MCF 10A (cell line): ENCODE measurements at regions of chr5 and their contacts with region 1.

Region 1: GRCh38 chr5:181223058-181223728 is at the start of gene TRIM41:
- DNase-seq: peak; percentile 99
- H3K4me3 Mint-ChIP-seq: peak within 1 kb of the TSS; percentile 91
- H3K27ac Mint-ChIP-seq: peak within 1 kb of the TSS; percentile 91
- H3K4me1 Mint-ChIP-seq: peaks cover 26% of the 10 kb centered on the region
- H3K27me3 Mint-ChIP-seq: no peaks in the 10 kb centered on the region
- CTCF ChIP-seq: no peak
- total RNA-seq, gene TRIM41: 42.8 and 49.4 TPM in 2 replicates

Region 2: DNA sequence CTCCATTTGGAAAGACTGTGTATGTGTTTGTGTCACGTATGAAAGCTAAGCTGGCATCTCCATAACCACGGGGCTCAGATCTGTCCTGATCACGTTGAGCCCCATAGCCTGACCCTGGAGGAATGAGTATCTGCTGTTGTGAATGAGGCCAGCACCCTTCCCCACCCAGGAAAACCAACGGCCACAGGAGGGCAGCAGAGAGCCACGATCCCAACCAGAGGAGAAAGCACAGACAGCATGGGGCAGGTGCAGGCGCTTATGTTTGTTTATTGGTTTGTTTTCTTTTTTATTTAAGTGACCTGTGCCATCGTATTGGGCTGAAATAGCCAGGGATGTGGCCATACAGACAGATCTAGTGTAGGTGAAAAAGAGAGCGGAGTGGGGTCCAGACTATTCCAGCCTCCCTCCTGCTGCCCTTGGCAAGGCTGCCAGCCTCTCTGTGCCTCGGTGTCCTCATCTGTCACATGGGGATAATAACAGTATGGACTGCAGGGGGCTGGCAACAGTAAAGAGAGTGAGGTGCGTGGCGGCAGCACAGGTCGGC is 63.8 kb before region 1 on chr5:
- CTCF ChIA-PET with region 1: no interaction called
- POLR2A ChIA-PET with region 1: interaction called, 3 read pairs
- intact Hi-C with region 1: loop called (anchors 2 kb)
- DNase-seq: peak; percentile 94
- H3K4me3 Mint-ChIP-seq: peak overlapping the region; percentile 66
- H3K27ac Mint-ChIP-seq: peak overlapping the region; percentile 97
- H3K4me1 Mint-ChIP-seq: peaks cover 11% of the 10 kb centered on the region
- H3K27me3 Mint-ChIP-seq: peaks cover 25% of the 10 kb centered on the region
- CTCF ChIP-seq: peak; percentile 97

Region 3: GRCh38 chr5:181207214-181208107 is 15.7 kb before region 1 on chr5:
- CTCF ChIA-PET with region 1: interaction called, 8 read pairs
- POLR2A ChIA-PET with region 1: interaction called, 130 read pairs
- intact Hi-C with region 1: loop called (anchors 1 kb)
- DNase-seq: peak; percentile 94
- H3K4me3 Mint-ChIP-seq: peak overlapping the region; percentile 84
- H3K27ac Mint-ChIP-seq: peak overlapping the region; percentile 81
- H3K4me1 Mint-ChIP-seq: peaks cover 29% of the 10 kb centered on the region
- H3K27me3 Mint-ChIP-seq: no peaks in the 10 kb centered on the region
- CTCF ChIP-seq: no peak

Region 4: GRCh38 chr5:181234455-181235306 is 11.5 kb after region 1 on chr5:
- CTCF ChIA-PET with region 1: interaction called, 10 read pairs
- POLR2A ChIA-PET with region 1: interaction called, 374 read pairs
- intact Hi-C with region 1: no loop called
- DNase-seq: peak; percentile 39
- H3K4me3 Mint-ChIP-seq: no peak overlapping the region
- H3K27ac Mint-ChIP-seq: peak overlapping the region; percentile 51
- H3K4me1 Mint-ChIP-seq: peaks cover 22% of the 10 kb centered on the region
- H3K27me3 Mint-ChIP-seq: no peaks in the 10 kb centered on the region
- CTCF ChIP-seq: no peak

Region 5: GRCh38 chr5:181243512-181244343 is 20.5 kb after region 1 on chr5 and contains the start of gene RACK1:
- CTCF ChIA-PET with region 1: interaction called, 3 read pairs
- POLR2A ChIA-PET with region 1: interaction called, 374 read pairs
- intact Hi-C with region 1: loop called (anchors 1 kb)
- DNase-seq: peak; percentile 96
- H3K4me3 Mint-ChIP-seq: peak within 1 kb of the TSS; percentile 99
- H3K27ac Mint-ChIP-seq: peak within 1 kb of the TSS; percentile 99
- H3K4me1 Mint-ChIP-seq: peaks cover 48% of the 10 kb centered on the region
- H3K27me3 Mint-ChIP-seq: no peaks in the 10 kb centered on the region
- CTCF ChIP-seq: no peak
- total RNA-seq, gene RACK1: 2,995 and 4,050 TPM in 2 replicates

Region 6: DNA sequence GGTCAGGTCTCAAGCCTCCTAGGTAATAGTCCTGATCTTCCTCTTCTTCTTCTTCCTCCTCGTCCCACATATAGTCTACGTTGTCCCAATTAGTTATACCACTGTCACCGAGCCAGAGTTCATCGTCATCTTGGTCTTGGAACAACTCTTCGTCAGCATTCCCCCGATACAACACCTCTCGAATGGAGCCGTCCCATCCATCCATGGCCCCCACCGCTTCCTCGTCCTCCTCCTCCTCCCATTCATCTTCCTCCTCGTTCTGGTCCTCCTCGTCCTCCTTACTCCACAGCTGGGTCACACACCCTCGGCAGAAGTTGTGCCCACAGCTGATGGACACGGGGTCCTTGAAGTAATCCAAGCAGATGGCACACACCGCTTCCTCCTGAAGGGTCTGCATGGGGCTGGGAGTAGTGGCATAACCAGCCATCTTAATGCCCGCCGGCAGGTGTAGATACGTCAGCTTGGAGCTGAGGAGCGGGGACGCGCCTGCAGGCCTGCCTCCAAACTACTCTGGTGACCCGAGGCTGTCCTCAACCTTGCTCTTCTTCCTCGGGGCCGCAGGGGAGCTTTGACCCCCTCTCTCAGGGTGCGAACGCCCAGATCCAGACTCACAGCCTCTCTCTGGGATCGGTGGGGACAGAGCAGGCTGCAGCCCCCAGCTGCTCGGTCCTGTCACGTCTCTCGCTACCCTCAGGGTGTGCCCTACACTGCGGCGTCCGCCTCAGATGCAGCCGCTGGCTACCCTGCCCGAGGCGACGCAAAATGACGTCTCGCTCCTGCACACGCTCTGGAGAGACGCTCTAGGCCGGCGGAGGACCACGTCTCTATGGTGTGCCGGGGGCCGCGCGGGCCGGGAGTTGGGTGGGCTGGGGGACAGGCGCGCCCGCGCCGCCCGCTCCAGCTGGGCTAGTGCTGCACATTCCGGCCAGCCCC is 37.5 kb after region 1 on chr5 and contains the start of gene TRIM52:
- CTCF ChIA-PET with region 1: interaction called, 8 read pairs
- POLR2A ChIA-PET with region 1: interaction called, 59 read pairs
- intact Hi-C with region 1: loop called (anchors 2 kb)
- DNase-seq: peak; percentile 91
- H3K4me3 Mint-ChIP-seq: peak within 1 kb of the TSS; percentile 86
- H3K27ac Mint-ChIP-seq: peak within 1 kb of the TSS; percentile 89
- H3K4me1 Mint-ChIP-seq: peaks cover 23% of the 10 kb centered on the region
- H3K27me3 Mint-ChIP-seq: no peaks in the 10 kb centered on the region
- CTCF ChIP-seq: no peak
- total RNA-seq, gene TRIM52: 12.5 and 16.1 TPM in 2 replicates